Heart left ventricle (tissue), 16 donors: ENCODE measurements at regions of chrX and their contacts with region 1.

Region 1: DNA sequence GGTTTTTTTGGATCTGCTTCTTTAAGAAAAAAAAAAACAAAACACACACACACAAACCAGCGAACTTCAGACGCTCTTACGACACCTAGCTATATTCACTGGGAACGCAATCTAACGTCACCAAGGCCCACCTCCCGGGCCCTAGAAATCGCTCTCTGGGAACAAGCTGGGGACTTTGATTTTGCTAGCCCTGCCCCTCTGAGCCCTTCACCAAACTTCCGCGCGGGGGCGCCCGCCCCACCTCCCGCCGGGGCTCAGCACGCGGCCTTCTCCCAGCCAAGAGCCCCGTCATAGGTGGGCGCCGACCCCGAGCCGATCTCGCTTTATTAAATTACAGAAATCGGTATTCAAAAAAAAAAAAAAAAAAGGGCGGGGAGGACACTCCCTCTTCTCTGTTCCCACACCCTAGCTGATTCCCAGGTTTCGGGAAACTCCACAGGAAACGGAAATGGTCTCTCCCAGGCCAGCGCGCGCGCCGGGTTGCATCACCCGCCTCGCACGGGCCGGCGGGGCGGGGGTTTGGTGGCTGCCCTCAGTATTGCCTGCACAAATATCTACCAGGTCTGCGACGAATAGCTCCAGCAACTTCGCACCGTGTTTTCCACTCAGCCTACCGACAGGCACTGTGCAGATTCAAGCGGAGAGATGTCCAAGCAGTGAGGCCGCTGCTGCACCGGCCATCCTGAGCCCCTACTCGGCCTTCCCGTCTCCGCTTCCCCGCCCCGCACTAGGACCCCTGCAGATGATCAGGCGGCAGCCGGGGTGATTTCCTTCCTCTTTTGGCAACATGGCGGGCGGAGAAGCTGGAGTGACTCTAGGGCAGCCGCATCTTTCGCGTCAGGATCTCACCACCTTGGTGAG is at the start of gene EIF2S3:
- DNase-seq: peak; percentile 86 to 93 (median 87)
- ATAC-seq: peak; percentile 97 to 99 (median 98)
- H3K4me3 ChIP-seq: peak within 1 kb of the TSS in 6 of 12 donors; percentile 57 to 86 (median 77)
- H3K27ac ChIP-seq: peak within 1 kb of the TSS; percentile 88 to 98 (median 93)
- H3K4me1 ChIP-seq: peaks cover 0 to 11% (median 0%) of the 10 kb centered on the region in 12 donors
- H3K27me3 ChIP-seq: peaks cover 0 to 5% (median 0%) of the 10 kb centered on the region in 9 donors
- CTCF ChIP-seq: peak; percentile 47 to 89 (median 72)
- POLR2A ChIP-seq: peak in 1 of 2 donors; percentile 13
- total RNA-seq, gene EIF2S3: 60.0 to 126 (median 83.0) TPM

Region 2: DNA sequence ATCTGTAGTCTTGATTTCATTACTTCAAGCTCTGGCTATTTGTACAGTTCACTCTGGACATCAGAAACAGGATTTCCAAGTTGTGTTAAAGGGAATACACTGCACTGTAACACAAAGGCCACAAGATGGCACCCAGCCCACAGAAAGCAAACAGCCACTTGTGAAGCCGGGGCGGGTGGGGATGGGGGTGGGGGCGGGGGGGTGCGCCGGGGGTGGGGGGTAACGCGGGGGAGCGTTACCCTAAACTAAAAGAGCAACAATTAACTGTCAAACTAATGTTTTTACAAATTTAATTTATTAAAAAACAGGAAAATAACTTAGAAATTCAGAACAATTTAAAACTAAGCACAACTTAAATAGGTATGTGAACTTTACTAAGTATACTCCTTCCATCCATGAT is 359.8 kb before region 1 on chrX:
- intact Hi-C with region 1: loop called in 2 of 10 experiments (anchors 10 kb)
- DNase-seq: peak in 3 of 5 donors; percentile 44 to 73 (median 50)
- ATAC-seq: peak in 3 of 4 donors; percentile 56 to 75 (median 73)
- H3K4me3 ChIP-seq: no peak overlapping the region
- H3K27ac ChIP-seq: no peak overlapping the region
- H3K4me1 ChIP-seq: no peaks in the 10 kb centered on the region
- H3K27me3 ChIP-seq: peaks cover 0 to 2% (median 0%) of the 10 kb centered on the region in 9 donors
- CTCF ChIP-seq: peak; percentile 21 to 57 (median 42)
- POLR2A ChIP-seq: no peak

Region 3: DNA sequence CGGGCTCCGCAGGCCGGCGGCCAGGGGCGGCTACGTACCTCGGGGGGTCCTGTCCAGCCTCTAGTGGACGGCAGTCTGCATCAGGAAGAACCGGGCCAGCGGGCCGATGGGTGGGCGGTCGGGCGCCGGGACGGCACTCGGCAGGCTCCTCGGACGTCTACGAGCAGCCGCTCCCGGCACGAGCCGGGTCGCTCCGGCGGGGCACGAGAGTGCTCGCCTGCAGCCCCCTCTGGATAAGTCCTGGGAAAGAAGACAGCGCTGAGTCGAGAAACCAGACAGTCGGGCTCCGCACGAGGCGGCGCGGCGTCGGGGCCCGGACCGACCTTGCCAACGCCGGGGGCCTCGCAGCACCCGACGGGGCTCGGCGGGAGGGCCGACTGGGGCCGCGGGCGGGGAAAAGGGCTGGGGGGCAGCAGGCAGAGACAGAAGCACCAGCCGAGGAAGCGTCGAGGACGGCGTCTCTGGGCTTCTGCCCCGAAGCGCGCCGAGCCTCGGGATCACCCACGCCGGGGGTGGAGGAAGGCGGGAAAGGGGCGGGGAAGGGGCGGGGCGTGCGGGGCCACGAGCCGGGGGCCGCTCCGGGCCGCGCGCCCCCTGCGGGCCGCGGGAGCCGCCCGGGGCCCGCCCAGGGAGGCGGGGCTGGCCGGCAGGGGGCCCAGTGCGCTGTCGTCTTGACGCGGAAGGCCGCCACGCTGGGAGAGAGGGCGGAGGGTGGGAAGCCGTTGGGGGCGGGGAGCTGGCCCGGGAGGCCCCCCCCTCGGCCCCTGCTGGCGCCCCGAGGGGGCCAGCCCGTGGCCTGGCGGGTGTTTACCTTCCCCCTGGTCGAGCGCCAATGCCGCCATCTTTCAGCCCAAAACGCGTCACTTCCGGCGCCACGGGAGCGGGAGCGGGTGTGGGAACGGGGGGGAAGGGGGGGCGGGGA is 29.3 kb before region 1 on chrX:
- intact Hi-C with region 1: loop called in 4 of 10 experiments (anchors 1 to 2 kb)
- DNase-seq: peak; percentile 89 to 93 (median 91)
- ATAC-seq: peak; percentile 93 to 97 (median 96)
- H3K4me3 ChIP-seq: peak overlapping the region; percentile 51 to 99 (median 82)
- H3K27ac ChIP-seq: peak overlapping the region; percentile 90 to 97 (median 96)
- H3K4me1 ChIP-seq: peaks cover 0 to 13% (median under 1%) of the 10 kb centered on the region in 12 donors
- H3K27me3 ChIP-seq: peaks cover 0 to 46% (median 0%) of the 10 kb centered on the region in 9 donors
- CTCF ChIP-seq: peak in 6 of 12 donors; percentile 19 to 40 (median 30)
- POLR2A ChIP-seq: peak in 1 of 2 donors; percentile 84

Region 4: DNA sequence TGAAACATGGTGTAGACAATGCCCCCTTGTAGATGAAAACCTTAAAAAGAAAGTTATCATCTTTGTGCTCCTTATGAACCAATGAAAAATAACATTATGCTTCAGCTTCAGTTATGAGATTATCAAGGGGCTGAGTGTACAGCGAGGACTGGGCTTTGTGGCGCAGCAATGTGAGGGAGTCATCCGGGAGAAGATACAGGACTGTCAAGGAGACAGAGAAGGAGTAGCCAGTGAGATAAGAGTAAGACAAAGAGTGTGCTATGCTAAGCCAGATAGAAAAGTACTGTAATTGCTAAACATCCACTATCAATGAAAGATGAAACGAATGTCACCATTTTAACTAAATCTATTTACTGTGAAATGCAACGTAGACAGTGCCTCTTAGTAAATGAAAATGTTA is 23.8 kb before region 1 on chrX:
- intact Hi-C with region 1: loop called in 4 of 10 experiments (anchors 1 to 2 kb)
- DNase-seq: no peak
- ATAC-seq: no peak
- H3K4me3 ChIP-seq: no peak overlapping the region
- H3K27ac ChIP-seq: no peak overlapping the region
- H3K4me1 ChIP-seq: no peaks in the 10 kb centered on the region
- H3K27me3 ChIP-seq: peaks cover 0 to 60% (median 0%) of the 10 kb centered on the region in 9 donors
- CTCF ChIP-seq: no peak
- POLR2A ChIP-seq: no peak

Region 5: GRCh38 chrX:24448762-24449250 is 394.4 kb after region 1 on chrX:
- intact Hi-C with region 1: no loop called
- DNase-seq: no peak
- ATAC-seq: no peak
- H3K4me3 ChIP-seq: no peak overlapping the region
- H3K27ac ChIP-seq: no peak overlapping the region
- H3K4me1 ChIP-seq: no peaks in the 10 kb centered on the region
- H3K27me3 ChIP-seq: peaks cover 0 to 13% (median 0%) of the 10 kb centered on the region in 9 donors
- CTCF ChIP-seq: no peak
- POLR2A ChIP-seq: no peak